ENCODE measurements at regions of chrX and their contacts with region 1.

Region 1: DNA sequence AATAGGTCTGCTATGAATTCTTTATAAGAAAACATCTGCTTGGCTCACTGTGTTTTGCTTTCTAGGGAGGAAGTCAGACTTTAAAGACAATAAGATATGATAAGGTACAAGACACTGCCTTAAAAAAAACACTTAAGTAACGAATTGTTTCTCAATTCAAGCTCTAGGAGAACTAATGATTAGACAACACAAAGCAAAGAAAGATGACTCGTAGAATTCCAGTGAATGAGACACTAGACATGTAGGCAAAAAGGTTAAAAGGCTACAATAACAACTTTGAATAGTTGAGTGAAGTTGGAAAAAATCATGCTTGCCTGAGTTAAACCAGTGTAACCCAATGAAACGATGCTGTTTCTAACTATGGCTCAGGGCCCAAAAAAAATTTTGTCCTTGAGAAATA is 344.4 kb upstream of the ACTRT1 start:
- DNase-seq: no peak
- H3K4me3 ChIP-seq: no peak overlapping the region
- H3K27ac ChIP-seq: no peak overlapping the region
- H3K4me1 ChIP-seq: no peaks in the 10 kb centered on the region
- H3K27me3 ChIP-seq: no peaks in the 10 kb centered on the region
- CTCF ChIP-seq: no peak
- POLR2A ChIP-seq: no peak

Region 2: GRCh38 chrX:127011629-127012028 is 1385.0 kb before region 1 on chrX:
- intact Hi-C with region 1: loop called (anchors 5 kb)
- DNase-seq: no peak
- H3K4me3 ChIP-seq: no peak overlapping the region
- H3K27ac ChIP-seq: no peak overlapping the region
- H3K4me1 ChIP-seq: no peaks in the 10 kb centered on the region
- H3K27me3 ChIP-seq: no peaks in the 10 kb centered on the region
- CTCF ChIP-seq: no peak
- POLR2A ChIP-seq: no peak

Region 3: GRCh38 chrX:128287693-128288092 is 108.9 kb before region 1 on chrX:
- intact Hi-C with region 1: no loop called
- DNase-seq: no peak
- H3K4me3 ChIP-seq: no peak overlapping the region
- H3K27ac ChIP-seq: no peak overlapping the region
- H3K4me1 ChIP-seq: no peaks in the 10 kb centered on the region
- H3K27me3 ChIP-seq: no peaks in the 10 kb centered on the region
- CTCF ChIP-seq: no peak
- POLR2A ChIP-seq: no peak